CD4-positive, alpha-beta memory T cell (primary cell): ENCODE measurements at regions of chr20 and their contacts with region 1.

Region 1: DNA sequence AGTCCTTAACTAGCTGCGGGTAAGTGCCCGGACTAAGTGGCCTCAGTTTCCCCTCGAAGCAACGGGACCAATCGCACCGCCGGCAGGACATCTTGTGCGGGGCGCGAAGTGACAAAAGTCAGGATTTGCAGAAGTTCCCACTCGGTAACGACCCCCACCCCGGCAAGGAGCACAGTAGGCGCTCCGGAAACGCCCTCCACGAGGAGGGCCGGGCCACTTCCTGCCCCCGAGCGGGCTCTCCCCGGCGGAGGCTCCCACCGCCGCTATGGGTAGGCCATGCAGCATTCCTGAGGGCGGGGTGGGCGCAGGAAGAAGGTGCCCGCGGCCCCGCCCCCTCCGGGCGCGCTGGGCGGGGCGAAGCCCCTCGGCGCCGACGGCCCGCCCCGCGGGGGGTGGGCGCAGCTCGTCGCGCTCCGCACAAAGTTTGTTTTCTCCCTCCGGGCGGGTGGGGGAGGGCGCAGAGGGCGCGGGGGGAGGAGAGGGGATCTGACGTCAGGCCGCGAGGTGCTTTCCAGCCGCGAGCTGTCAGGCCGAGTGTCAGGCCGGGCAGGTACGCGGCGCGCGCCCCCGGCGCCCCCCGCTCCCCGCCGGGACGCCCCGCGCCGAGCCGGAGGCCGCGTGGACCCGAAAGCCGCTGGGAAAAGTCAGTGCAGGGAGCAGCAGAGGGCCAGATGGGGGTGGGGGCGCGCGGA is at the start of gene TGIF2:
- DNase-seq: peak; percentile 87 to 92 (median 89)
- H3K4me3 ChIP-seq: peak within 1 kb of the TSS; percentile 47 to 73
- H3K4me3 Mint-ChIP-seq: peak within 1 kb of the TSS; percentile 89 to 96 (median 92)
- H3K27ac ChIP-seq: peak within 1 kb of the TSS; percentile 100
- H3K27ac Mint-ChIP-seq: peak within 1 kb of the TSS; percentile 95 to 99 (median 99)
- H3K4me1 ChIP-seq: peaks cover 35% of the 10 kb centered on the region
- H3K4me1 Mint-ChIP-seq: peaks cover 24 to 46% (median 30%) of the 10 kb centered on the region in 4 donors
- H3K27me3 ChIP-seq: no peaks in the 10 kb centered on the region
- H3K27me3 Mint-ChIP-seq: no peaks in the 10 kb centered on the region
- total RNA-seq, gene TGIF2: 31.7 to 35.0 TPM

Region 2: GRCh38 chr20:36460648-36461599 is 112.3 kb before region 1 on chr20:
- CTCF ChIA-PET with region 1: no interaction called
- POLR2A ChIA-PET with region 1: interaction called, 3 read pairs
- intact Hi-C with region 1: loop called (anchors 2 kb)
- DNase-seq: peak; percentile 85 to 90 (median 86)
- H3K4me3 ChIP-seq: peak overlapping the region; percentile 8 to 37
- H3K4me3 Mint-ChIP-seq: peak overlapping the region; percentile 80 to 86 (median 82)
- H3K27ac ChIP-seq: peak overlapping the region; percentile 90
- H3K27ac Mint-ChIP-seq: peak overlapping the region; percentile 94 to 97 (median 96)
- H3K4me1 ChIP-seq: peaks cover 48% of the 10 kb centered on the region
- H3K4me1 Mint-ChIP-seq: peaks cover 31 to 56% (median 42%) of the 10 kb centered on the region in 4 donors
- H3K27me3 ChIP-seq: no peaks in the 10 kb centered on the region
- H3K27me3 Mint-ChIP-seq: no peaks in the 10 kb centered on the region

Region 3: DNA sequence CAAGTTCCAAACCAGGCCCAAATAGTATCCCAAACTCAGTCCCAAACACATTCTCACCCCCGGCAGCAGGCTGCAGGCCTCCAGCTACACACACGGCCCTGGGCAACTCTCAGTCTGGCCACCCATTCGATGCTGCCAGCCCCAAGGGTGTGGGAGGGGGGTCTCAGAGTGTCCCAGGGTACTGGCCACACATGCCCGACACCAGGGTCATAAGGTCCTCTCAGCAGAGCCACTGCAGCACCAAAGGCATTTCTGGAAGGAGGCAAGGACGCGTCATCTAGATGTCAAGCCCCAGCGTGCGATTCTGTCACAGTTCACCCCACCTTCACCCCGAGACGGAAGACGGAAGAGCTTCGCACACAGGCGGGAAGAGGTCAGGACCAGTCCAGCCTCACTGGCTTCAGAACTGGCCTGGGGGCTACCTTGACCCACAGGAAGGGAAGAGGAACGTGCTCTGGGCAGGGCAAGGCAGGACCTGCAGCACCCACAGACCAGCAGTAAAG is 22.4 kb before region 1 on chr20:
- CTCF ChIA-PET with region 1: no interaction called
- POLR2A ChIA-PET with region 1: no interaction called
- intact Hi-C with region 1: loop called (anchors 1 kb)
- DNase-seq: no peak
- H3K4me3 ChIP-seq: no peak overlapping the region
- H3K4me3 Mint-ChIP-seq: no peak overlapping the region
- H3K27ac ChIP-seq: no peak overlapping the region
- H3K27ac Mint-ChIP-seq: no peak overlapping the region
- H3K4me1 ChIP-seq: no peaks in the 10 kb centered on the region
- H3K4me1 Mint-ChIP-seq: peaks cover 0 to 7% (median under 1%) of the 10 kb centered on the region in 4 donors
- H3K27me3 ChIP-seq: no peaks in the 10 kb centered on the region
- H3K27me3 Mint-ChIP-seq: no peaks in the 10 kb centered on the region

Region 4: DNA sequence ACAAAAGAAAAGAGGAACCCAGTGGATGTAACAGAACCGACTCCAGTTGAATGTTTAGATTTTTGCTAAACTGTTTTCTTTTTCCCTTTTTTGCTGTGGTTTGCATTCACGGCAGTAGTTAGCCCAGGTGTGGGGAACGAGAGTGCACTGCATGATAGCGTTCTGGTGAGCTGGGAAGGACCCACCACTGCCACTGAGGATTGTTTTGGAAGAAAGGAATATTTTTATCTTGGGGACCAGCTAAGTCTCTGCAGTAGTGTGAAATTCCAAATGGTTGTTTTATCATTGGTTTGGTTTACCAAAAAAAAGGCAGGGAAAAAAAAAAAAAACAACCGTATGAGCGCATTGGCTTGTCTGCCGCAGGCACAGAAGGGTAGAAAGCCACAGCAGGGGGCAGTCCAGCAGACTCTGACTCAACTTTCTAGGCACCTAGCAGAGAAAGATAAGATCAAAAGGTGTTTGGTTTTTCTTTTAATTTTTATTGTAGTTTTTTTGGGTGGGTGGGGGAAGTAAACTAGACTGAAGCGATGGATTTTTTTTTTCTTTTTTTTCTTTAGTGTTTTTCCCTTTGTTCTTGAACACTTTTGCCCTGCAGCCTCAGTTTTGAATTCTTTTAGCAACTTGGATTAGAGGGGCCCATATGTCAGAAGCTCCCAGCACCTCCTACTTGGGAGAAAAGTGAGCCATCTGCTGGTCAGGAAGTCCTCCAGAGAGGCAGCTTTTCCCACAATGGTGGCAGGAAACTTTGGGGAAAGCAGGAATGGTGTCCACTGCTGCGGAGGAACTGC is 18.8 kb after region 1 on chr20:
- CTCF ChIA-PET with region 1: interaction called, 132 read pairs
- POLR2A ChIA-PET with region 1: interaction called, 202 read pairs
- intact Hi-C with region 1: loop called (anchors 1 kb)
- DNase-seq: peak; percentile 51 to 87 (median 63)
- H3K4me3 ChIP-seq: no peak overlapping the region
- H3K4me3 Mint-ChIP-seq: peak overlapping the region in 7 of 8 donors; percentile 26 to 77 (median 57)
- H3K27ac ChIP-seq: peak overlapping the region; percentile 38
- H3K27ac Mint-ChIP-seq: peak overlapping the region; percentile 77 to 93 (median 86)
- H3K4me1 ChIP-seq: peaks cover 51% of the 10 kb centered on the region
- H3K4me1 Mint-ChIP-seq: peaks cover 29 to 64% (median 44%) of the 10 kb centered on the region in 4 donors
- H3K27me3 ChIP-seq: no peaks in the 10 kb centered on the region
- H3K27me3 Mint-ChIP-seq: no peaks in the 10 kb centered on the region

Region 5: GRCh38 chr20:36684747-36685146 is 111.5 kb after region 1 on chr20:
- CTCF ChIA-PET with region 1: no interaction called
- POLR2A ChIA-PET with region 1: no interaction called
- intact Hi-C with region 1: no loop called
- DNase-seq: no peak
- H3K4me3 ChIP-seq: no peak overlapping the region
- H3K4me3 Mint-ChIP-seq: no peak overlapping the region
- H3K27ac ChIP-seq: no peak overlapping the region
- H3K27ac Mint-ChIP-seq: no peak overlapping the region
- H3K4me1 ChIP-seq: no peaks in the 10 kb centered on the region
- H3K4me1 Mint-ChIP-seq: no peaks in the 10 kb centered on the region
- H3K27me3 ChIP-seq: no peaks in the 10 kb centered on the region
- H3K27me3 Mint-ChIP-seq: no peaks in the 10 kb centered on the region

Region 6: GRCh38 chr20:36717657-36718056 is 144.4 kb after region 1 on chr20:
- CTCF ChIA-PET with region 1: no interaction called
- POLR2A ChIA-PET with region 1: no interaction called
- intact Hi-C with region 1: no loop called
- DNase-seq: peak in 4 of 5 donors; percentile 17 to 30 (median 22)
- H3K4me3 ChIP-seq: no peak overlapping the region
- H3K4me3 Mint-ChIP-seq: no peak overlapping the region
- H3K27ac ChIP-seq: no peak overlapping the region
- H3K27ac Mint-ChIP-seq: peak overlapping the region in 1 of 7 donors; percentile 8
- H3K4me1 ChIP-seq: no peaks in the 10 kb centered on the region
- H3K4me1 Mint-ChIP-seq: peaks cover 0 to 5% (median 4%) of the 10 kb centered on the region in 4 donors
- H3K27me3 ChIP-seq: no peaks in the 10 kb centered on the region
- H3K27me3 Mint-ChIP-seq: no peaks in the 10 kb centered on the region